Endothelial cell of umbilical vein (primary cell): ENCODE measurements at regions of chr12 and their contacts with region 1.

Region 1: GRCh38 chr12:52243856-52244614 is 11.0 kb downstream of the KRT7 start:
- DNase-seq: peak; percentile 84
- H3K4me3 ChIP-seq: no peak overlapping the region
- H3K27ac ChIP-seq: peak overlapping the region; percentile 61
- H3K4me1 ChIP-seq: peaks cover 23% of the 10 kb centered on the region
- H3K27me3 ChIP-seq: no peaks in the 10 kb centered on the region
- CTCF ChIP-seq: no peak
- POLR2A ChIP-seq: peak; percentile 23

Region 2: DNA sequence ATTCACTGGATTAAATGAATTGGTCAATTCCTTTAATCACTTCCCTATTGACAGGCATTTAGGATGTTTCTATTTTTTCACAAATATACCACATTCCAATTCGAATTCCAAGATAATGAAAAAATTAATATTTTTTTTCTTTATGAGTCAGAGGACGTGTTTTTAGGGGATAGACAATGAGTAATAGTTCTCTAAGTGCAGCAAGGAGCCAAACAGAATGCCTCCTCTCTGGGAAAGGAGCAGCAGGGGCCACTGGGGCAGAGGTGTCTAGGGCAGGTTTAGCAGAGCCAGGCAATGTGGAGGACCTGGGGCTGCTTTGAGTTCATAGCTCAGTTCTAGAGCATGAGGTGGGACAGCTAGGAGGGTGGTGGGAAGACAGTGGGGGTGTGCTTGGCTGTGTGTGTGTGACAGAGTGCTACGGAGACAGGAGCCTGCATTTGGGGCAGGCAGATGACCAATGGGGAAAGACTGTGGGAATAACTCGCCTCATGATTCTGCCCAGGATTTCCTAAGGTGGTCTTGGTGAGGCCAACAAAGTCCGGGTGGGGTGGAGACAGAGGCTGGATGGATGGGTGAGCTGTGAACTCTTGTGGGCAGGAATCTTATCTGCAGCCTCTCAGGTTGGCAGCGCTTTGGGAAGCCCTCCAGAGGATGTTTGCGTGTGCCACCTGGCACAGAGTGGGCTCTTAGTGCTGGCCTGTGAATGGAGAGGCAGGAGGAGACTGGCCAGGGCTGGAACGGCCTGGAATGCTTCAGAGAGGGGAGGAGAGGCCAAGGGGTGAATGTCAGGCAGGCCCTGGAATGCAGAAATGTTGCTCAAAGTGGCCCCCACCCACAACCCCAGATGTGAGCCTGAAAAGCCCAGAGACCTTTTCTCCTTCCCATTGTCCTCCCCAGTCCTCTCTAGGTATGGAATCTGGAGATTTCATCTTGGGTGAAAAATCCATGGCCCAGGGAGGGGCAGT is 13.4 kb before region 1 on chr12:
- CTCF ChIA-PET with region 1: interaction called, 10 read pairs
- POLR2A ChIA-PET with region 1: no interaction called
- dilution Hi-C with region 1: no loop called
- intact Hi-C with region 1: loop called (anchors 1 kb)
- DNase-seq: peak; percentile 84
- H3K4me3 ChIP-seq: no peak overlapping the region
- H3K27ac ChIP-seq: peak overlapping the region; percentile 84
- H3K4me1 ChIP-seq: peaks cover 44% of the 10 kb centered on the region
- H3K27me3 ChIP-seq: no peaks in the 10 kb centered on the region
- CTCF ChIP-seq: no peak
- POLR2A ChIP-seq: peak; percentile 1

Region 3: GRCh38 chr12:52295663-52296062 is 51.6 kb after region 1 on chr12:
- CTCF ChIA-PET with region 1: no interaction called
- POLR2A ChIA-PET with region 1: no interaction called
- dilution Hi-C with region 1: no loop called
- intact Hi-C with region 1: no loop called
- DNase-seq: no peak
- H3K4me3 ChIP-seq: no peak overlapping the region
- H3K27ac ChIP-seq: no peak overlapping the region
- H3K4me1 ChIP-seq: no peaks in the 10 kb centered on the region
- H3K27me3 ChIP-seq: peaks cover 39 to 58% of the 10 kb centered on the region in 2 experiments
- CTCF ChIP-seq: no peak
- POLR2A ChIP-seq: no peak